Activated naive CD4-positive, alpha-beta T cell treated with anti-CD3 and anti-CD28 coated beads for 36 hours (primary cell): ENCODE measurements at regions of chr6 and their contacts with region 1.

Region 1: GRCh38 chr6:188821-189655 is 103.2 kb upstream of the DUSP22 start:
- DNase-seq: peak; percentile 94
- H3K4me3 Mint-ChIP-seq: no peak overlapping the region
- H3K27ac Mint-ChIP-seq: peak overlapping the region; percentile 69
- H3K4me1 Mint-ChIP-seq: peaks cover 49% of the 10 kb centered on the region
- H3K27me3 Mint-ChIP-seq: peaks cover 1% of the 10 kb centered on the region

Region 2: GRCh38 chr6:227074-227782 is 38.2 kb after region 1 on chr6:
- CTCF ChIA-PET with region 1: interaction called, 72 read pairs
- intact Hi-C with region 1: loop called (anchors 1 kb)
- DNase-seq: peak; percentile 60
- H3K4me3 Mint-ChIP-seq: no peak overlapping the region
- H3K27ac Mint-ChIP-seq: peak overlapping the region; percentile 95
- H3K4me1 Mint-ChIP-seq: peaks cover 65% of the 10 kb centered on the region
- H3K27me3 Mint-ChIP-seq: no peaks in the 10 kb centered on the region

Region 3: GRCh38 chr6:336159-337019 is 147.4 kb after region 1 on chr6:
- CTCF ChIA-PET with region 1: interaction called, 4 read pairs
- intact Hi-C with region 1: loop called (anchors 5 kb)
- DNase-seq: no peak
- H3K4me3 Mint-ChIP-seq: no peak overlapping the region
- H3K27ac Mint-ChIP-seq: no peak overlapping the region
- H3K4me1 Mint-ChIP-seq: peaks cover 40% of the 10 kb centered on the region
- H3K27me3 Mint-ChIP-seq: no peaks in the 10 kb centered on the region

Region 4: GRCh38 chr6:484086-484745 is 295.2 kb after region 1 on chr6:
- CTCF ChIA-PET with region 1: no interaction called
- intact Hi-C with region 1: loop called (anchors 1 kb)
- DNase-seq: peak; percentile 83
- H3K4me3 Mint-ChIP-seq: peak overlapping the region; percentile 35
- H3K27ac Mint-ChIP-seq: peak overlapping the region; percentile 99
- H3K4me1 Mint-ChIP-seq: peaks cover 87% of the 10 kb centered on the region
- H3K27me3 Mint-ChIP-seq: no peaks in the 10 kb centered on the region

Region 5: DNA sequence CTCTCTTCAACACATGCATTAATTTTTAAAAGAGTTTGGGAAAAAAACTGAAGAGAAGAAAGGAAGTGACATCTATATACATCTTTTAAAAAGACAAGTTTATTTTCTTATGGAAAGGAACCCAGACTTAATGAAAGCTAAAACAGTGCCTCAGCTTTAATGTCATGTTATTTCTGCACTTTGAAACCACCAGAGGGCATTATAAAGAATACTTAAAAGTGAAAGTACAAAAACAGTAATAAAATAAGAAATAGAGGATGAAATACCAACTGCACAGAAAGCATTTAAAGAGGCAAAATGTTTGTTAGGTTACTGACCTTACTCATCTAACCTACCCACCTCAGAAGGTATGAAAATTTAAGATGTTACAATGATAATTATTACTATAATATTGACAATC is 369.1 kb after region 1 on chr6:
- CTCF ChIA-PET with region 1: interaction called, 3 read pairs
- intact Hi-C with region 1: loop called (anchors 1 kb)
- DNase-seq: no peak
- H3K4me3 Mint-ChIP-seq: no peak overlapping the region
- H3K27ac Mint-ChIP-seq: peak overlapping the region; percentile 59
- H3K4me1 Mint-ChIP-seq: peaks cover 51% of the 10 kb centered on the region
- H3K27me3 Mint-ChIP-seq: no peaks in the 10 kb centered on the region

Region 6: DNA sequence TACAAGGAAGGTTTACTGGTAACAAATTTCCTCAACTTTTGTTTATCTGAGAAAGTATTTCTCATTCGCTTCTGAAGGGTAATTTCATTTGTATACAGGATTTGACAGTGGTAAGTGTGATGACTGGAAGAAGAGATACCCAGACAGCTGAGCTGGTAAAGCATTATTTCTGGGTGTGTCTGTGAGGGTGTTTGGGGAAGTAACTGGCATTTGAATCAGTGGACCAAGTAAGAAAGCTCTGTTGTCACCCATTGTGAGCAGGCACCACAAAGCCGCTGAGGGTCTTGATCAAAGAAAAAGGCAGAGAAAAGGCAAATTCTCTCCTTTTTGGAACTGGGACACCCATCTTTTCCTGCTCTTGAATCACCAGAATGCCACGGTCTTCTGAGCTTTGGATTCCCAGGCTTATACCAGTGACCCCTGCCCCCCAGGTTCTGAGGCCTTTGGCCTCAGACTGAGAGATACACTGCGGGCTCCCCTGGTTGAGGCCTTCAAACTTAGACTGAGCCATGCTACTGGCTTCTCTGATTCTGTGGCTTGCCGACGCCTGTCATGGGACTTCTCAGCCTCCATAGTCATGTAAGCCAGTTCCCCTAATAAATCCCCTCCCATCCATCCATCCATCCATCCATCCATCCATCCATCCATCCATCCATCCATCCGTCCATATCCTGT is 478.4 kb after region 1 on chr6:
- CTCF ChIA-PET with region 1: no interaction called
- intact Hi-C with region 1: no loop called
- DNase-seq: no peak
- H3K4me3 Mint-ChIP-seq: no peak overlapping the region
- H3K27ac Mint-ChIP-seq: no peak overlapping the region
- H3K4me1 Mint-ChIP-seq: peaks cover 28% of the 10 kb centered on the region
- H3K27me3 Mint-ChIP-seq: no peaks in the 10 kb centered on the region

Region 7: GRCh38 chr6:786946-787763 is 598.1 kb after region 1 on chr6:
- CTCF ChIA-PET with region 1: no interaction called
- intact Hi-C with region 1: loop called (anchors 2 kb)
- DNase-seq: peak; percentile 28
- H3K4me3 Mint-ChIP-seq: no peak overlapping the region
- H3K27ac Mint-ChIP-seq: no peak overlapping the region
- H3K4me1 Mint-ChIP-seq: peaks cover 15% of the 10 kb centered on the region
- H3K27me3 Mint-ChIP-seq: peaks cover 9% of the 10 kb centered on the region